ENCODE measurements at regions of chr19 and their contacts with region 1.

Region 1: DNA sequence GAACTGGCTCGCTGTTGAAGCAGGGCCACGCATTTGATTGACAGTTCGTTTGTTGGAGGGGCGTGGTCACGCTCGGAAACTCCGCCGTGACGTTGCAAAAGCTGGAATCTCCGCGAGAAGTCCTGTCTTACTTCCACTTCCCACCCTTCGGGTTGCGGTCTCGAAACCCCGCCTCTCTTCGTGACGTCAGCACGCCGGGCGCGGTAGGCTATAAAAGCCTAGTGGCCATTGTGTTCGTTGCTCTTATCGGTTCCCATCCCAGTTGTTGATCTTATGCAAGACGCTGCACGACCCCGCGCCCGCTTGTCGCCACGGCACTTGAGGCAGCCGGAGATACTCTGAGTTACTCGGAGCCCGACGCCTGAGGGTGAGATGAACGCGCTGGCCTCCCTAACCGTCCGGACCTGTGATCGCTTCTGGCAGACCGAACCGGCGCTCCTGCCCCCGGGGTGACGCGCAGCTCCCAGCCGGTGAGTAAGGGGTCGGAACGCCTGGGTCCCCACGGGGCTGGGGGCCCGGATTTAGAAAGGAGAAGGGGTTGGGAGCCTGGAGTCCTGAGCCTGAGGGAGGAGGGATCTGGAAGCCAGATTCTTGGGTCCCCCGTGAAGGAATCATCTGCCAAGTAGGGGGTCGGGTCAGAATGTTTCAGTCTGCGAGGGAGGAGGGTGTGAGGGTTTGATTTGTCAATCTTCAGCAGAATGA is at the start of gene PPP1R15A:
- DNase-seq: peak; percentile 96 to 99
- H3K4me3 ChIP-seq: peak within 1 kb of the TSS; percentile 95 to 100
- H3K27ac ChIP-seq: peak within 1 kb of the TSS; percentile 99 to 100
- H3K4me1 ChIP-seq: peaks cover 5 to 55% (median 38%) of the 10 kb centered on the region in 4 donors
- H3K27me3 ChIP-seq: no peaks in the 10 kb centered on the region
- CTCF ChIP-seq: peak in 1 of 2 experiments; percentile 44

Region 2: DNA sequence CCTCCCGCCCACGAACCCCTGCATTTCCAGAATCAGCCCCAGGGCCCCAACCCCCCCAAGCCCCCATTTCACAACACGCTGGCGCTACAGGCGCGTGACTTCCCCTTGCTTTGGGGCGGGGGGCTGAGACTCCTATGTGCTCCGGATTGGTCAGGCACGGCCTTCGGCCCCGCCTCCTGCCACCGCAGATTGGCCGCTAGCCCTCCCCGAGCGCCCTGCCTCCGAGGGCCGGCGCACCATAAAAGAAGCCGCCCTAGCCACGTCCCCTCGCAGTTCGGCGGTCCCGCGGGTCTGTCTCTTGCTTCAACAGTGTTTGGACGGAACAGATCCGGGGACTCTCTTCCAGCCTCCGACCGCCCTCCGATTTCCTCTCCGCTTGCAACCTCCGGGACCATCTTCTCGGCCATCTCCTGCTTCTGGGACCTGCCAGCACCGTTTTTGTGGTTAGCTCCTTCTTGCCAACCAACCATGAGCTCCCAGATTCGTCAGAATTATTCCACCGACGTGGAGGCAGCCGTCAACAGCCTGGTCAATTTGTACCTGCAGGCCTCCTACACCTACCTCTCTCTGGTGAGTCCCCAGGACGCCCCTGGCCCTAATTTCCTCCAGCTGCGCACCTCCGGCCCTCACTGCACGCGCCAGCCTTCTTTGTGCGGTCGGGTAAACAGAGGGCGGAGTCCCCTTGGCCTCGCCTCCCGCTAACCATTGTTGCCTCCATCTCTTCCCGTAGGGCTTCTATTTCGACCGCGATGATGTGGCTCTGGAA is 92.9 kb after region 1 on chr19 and contains the start of gene FTL:
- intact Hi-C with region 1: loop called (anchors 10 kb)
- DNase-seq: peak; percentile 98 to 99
- H3K4me3 ChIP-seq: peak within 1 kb of the TSS; percentile 83 to 90
- H3K27ac ChIP-seq: peak within 1 kb of the TSS; percentile 88 to 97
- H3K4me1 ChIP-seq: peaks cover 0 to 61% (median 47%) of the 10 kb centered on the region in 4 donors
- H3K27me3 ChIP-seq: no peaks in the 10 kb centered on the region
- CTCF ChIP-seq: peak in 1 of 2 experiments; percentile 28

Region 3: GRCh38 chr19:49118565-49119410 is 246.5 kb after region 1 on chr19 and contains the start of gene C19orf73:
- intact Hi-C with region 1: loop called (anchors 5 kb)
- DNase-seq: peak; percentile 91 to 97
- H3K4me3 ChIP-seq: peak within 1 kb of the TSS; percentile 57 to 85
- H3K27ac ChIP-seq: peak within 1 kb of the TSS; percentile 85 to 92
- H3K4me1 ChIP-seq: peaks cover 7 to 40% (median 28%) of the 10 kb centered on the region in 4 donors
- H3K27me3 ChIP-seq: peaks cover 0 to 3% of the 10 kb centered on the region in 2 donors
- CTCF ChIP-seq: peak in 1 of 2 experiments; percentile 22

Measured in tibial artery (tissue), 4 donors.